ENCODE measurements at regions of chr1 and their contacts with region 1.

Region 1: GRCh38 chr1:58652651-58653184 is 47.1 kb downstream of the MYSM1 start:
- DNase-seq: peak; percentile 11 to 66 (median 55)
- ATAC-seq: peak; percentile 96
- H3K4me3 ChIP-seq: no peak overlapping the region
- H3K4me3 Mint-ChIP-seq: no peak overlapping the region
- H3K27ac ChIP-seq: no peak overlapping the region
- H3K27ac Mint-ChIP-seq: peak overlapping the region in 3 of 9 donors; percentile 7 to 49 (median 25)
- H3K4me1 ChIP-seq: peaks cover 0 to 8% of the 10 kb centered on the region in 2 donors
- H3K4me1 Mint-ChIP-seq: peaks cover 17 to 36% (median 25%) of the 10 kb centered on the region in 7 donors
- H3K27me3 ChIP-seq: no peaks in the 10 kb centered on the region
- H3K27me3 Mint-ChIP-seq: no peaks in the 10 kb centered on the region

Region 2: DNA sequence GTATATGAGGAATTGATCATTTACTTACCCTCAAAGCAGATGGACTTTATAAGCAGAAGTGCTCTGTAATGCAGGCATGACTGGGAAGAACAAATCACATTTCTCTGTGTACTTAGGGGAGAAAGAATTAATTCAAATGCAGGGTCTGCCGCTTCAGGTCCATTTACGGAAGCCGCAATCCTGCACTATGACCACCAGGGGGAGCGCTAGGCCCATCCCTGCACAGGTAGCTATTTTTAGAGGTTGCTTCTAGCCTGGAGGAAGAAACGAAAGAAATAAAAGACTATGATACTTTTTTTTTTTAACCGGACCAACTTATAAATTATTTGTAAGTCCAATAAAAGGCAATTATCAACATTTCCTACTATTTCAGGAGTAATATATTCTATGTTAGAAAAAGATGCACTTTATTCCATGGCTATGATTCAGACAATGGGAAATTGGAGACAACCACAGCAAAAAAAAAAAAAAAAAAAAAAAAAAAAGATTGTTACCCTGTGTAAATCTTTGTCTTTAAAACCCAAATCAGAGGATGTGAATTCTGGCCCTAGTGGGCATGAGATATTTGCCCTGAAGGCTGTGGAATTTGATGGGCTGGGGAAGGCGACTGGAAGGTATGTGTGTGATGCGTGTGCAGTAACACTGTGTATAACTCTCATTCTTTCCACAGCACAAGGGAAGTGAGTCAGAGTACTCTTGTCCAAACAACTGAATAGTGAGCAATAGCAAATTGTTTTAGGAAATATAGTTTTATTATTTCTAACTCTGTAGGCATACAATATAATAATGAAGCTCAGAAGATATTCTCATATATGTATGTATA is 1820.6 kb before region 1 on chr1:
- CTCF ChIA-PET with region 1: no interaction called
- POLR2A ChIA-PET with region 1: no interaction called
- intact Hi-C with region 1: loop called in 1 of 2 experiments (anchors 5 kb)
- DNase-seq: peak; percentile 39 to 76 (median 56)
- ATAC-seq: peak; percentile 83
- H3K4me3 ChIP-seq: no peak overlapping the region
- H3K4me3 Mint-ChIP-seq: peak overlapping the region in 3 of 10 donors; percentile 20 to 51 (median 22)
- H3K27ac ChIP-seq: no peak overlapping the region
- H3K27ac Mint-ChIP-seq: no peak overlapping the region
- H3K4me1 ChIP-seq: no peaks in the 10 kb centered on the region
- H3K4me1 Mint-ChIP-seq: peaks cover 0 to 8% (median 3%) of the 10 kb centered on the region in 7 donors
- H3K27me3 ChIP-seq: peaks cover 0 to 4% of the 10 kb centered on the region in 2 donors
- H3K27me3 Mint-ChIP-seq: peaks cover 0 to 31% (median 23%) of the 10 kb centered on the region in 5 donors

Region 3: GRCh38 chr1:58515794-58516401 is 136.8 kb before region 1 on chr1:
- CTCF ChIA-PET with region 1: interaction called, 43 read pairs
- POLR2A ChIA-PET with region 1: interaction called, 3 read pairs
- intact Hi-C with region 1: loop called (anchors 1 kb)
- DNase-seq: peak in 7 of 9 donors; percentile 30 to 63 (median 53)
- ATAC-seq: peak; percentile 80
- H3K4me3 ChIP-seq: no peak overlapping the region
- H3K4me3 Mint-ChIP-seq: no peak overlapping the region
- H3K27ac ChIP-seq: no peak overlapping the region
- H3K27ac Mint-ChIP-seq: peak overlapping the region; percentile 11 to 84 (median 78)
- H3K4me1 ChIP-seq: no peaks in the 10 kb centered on the region
- H3K4me1 Mint-ChIP-seq: peaks cover 0 to 28% (median 8%) of the 10 kb centered on the region in 7 donors
- H3K27me3 ChIP-seq: no peaks in the 10 kb centered on the region
- H3K27me3 Mint-ChIP-seq: no peaks in the 10 kb centered on the region

Region 4: DNA sequence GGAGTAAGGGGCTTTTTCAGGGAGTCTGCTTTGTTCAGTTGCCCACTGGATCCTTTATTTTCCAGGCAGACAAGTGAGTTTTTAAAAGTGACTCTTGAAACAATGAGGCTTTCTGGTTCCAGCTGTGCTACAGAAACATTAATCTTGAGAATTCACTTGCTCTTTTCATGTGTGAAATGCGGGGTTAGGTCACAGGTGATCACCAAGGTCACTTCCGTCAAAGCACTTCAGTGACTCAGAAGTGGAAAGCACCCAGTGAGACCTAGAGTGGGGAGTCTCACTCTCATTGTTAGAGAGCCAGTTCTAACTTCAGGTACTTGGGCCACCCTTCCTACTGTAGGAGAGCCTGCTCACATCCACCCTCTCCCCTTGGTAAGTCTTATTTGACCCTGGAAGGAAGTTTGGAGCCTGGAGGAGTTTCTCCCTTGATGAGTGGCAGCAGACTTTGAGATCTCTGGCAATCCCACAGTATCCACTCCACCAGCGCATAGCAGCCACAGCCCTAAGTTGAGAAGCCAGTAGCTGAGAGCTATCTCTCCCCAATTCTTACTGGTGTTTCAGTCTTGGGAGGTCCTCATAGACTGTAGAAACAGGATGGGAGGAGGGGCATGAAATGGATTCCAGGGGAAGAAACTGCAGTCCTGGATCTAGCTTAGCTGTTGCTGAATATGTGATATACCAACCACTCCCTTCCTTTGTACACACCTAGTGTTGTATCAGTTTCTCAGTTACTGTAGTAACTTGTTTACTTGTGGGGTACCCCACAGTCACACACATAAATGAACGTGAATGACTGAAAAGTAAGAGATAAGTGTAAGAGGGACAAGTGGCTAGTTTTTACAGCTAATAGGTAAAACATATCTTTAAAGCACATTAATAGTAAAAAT is 78.8 kb before region 1 on chr1:
- CTCF ChIA-PET with region 1: no interaction called
- POLR2A ChIA-PET with region 1: no interaction called
- intact Hi-C with region 1: loop called in 1 of 2 experiments (anchors 2 kb)
- DNase-seq: peak in 5 of 9 donors; percentile 15 to 41 (median 19)
- ATAC-seq: peak; percentile 85
- H3K4me3 ChIP-seq: no peak overlapping the region
- H3K4me3 Mint-ChIP-seq: peak overlapping the region in 1 of 10 donors; percentile 50
- H3K27ac ChIP-seq: no peak overlapping the region
- H3K27ac Mint-ChIP-seq: peak overlapping the region in 2 of 9 donors; percentile 22 to 74
- H3K4me1 ChIP-seq: peaks cover 0 to 3% of the 10 kb centered on the region in 2 donors
- H3K4me1 Mint-ChIP-seq: peaks cover 6 to 35% (median 19%) of the 10 kb centered on the region in 7 donors
- H3K27me3 ChIP-seq: peaks cover 4 to 8% of the 10 kb centered on the region in 2 donors
- H3K27me3 Mint-ChIP-seq: peaks cover 57 to 89% (median 77%) of the 10 kb centered on the region in 5 donors

Region 5: GRCh38 chr1:58670181-58670580 is 17.5 kb after region 1 on chr1:
- CTCF ChIA-PET with region 1: interaction called, 11 read pairs
- POLR2A ChIA-PET with region 1: no interaction called
- intact Hi-C with region 1: no loop called
- DNase-seq: no peak
- ATAC-seq: no peak
- H3K4me3 ChIP-seq: no peak overlapping the region
- H3K4me3 Mint-ChIP-seq: no peak overlapping the region
- H3K27ac ChIP-seq: no peak overlapping the region
- H3K27ac Mint-ChIP-seq: peak overlapping the region in 1 of 9 donors; percentile 15
- H3K4me1 ChIP-seq: no peaks in the 10 kb centered on the region
- H3K4me1 Mint-ChIP-seq: peaks cover 0 to 9% (median 0%) of the 10 kb centered on the region in 7 donors
- H3K27me3 ChIP-seq: no peaks in the 10 kb centered on the region
- H3K27me3 Mint-ChIP-seq: no peaks in the 10 kb centered on the region

Region 6: GRCh38 chr1:58699011-58699762 is 46.5 kb after region 1 on chr1:
- CTCF ChIA-PET with region 1: no interaction called
- POLR2A ChIA-PET with region 1: no interaction called
- intact Hi-C with region 1: loop called in 1 of 2 experiments (anchors 5 kb)
- DNase-seq: no peak
- ATAC-seq: peak; percentile 4
- H3K4me3 ChIP-seq: peak overlapping the region; percentile 80
- H3K4me3 Mint-ChIP-seq: peak overlapping the region; percentile 92 to 100 (median 98)
- H3K27ac ChIP-seq: peak overlapping the region; percentile 88
- H3K27ac Mint-ChIP-seq: peak overlapping the region; percentile 95 to 100 (median 98)
- H3K4me1 ChIP-seq: peaks cover 13 to 23% of the 10 kb centered on the region in 2 donors
- H3K4me1 Mint-ChIP-seq: peaks cover 4 to 22% (median 13%) of the 10 kb centered on the region in 7 donors
- H3K27me3 ChIP-seq: no peaks in the 10 kb centered on the region
- H3K27me3 Mint-ChIP-seq: peaks cover 0 to 3% (median 0%) of the 10 kb centered on the region in 5 donors

Region 7: DNA sequence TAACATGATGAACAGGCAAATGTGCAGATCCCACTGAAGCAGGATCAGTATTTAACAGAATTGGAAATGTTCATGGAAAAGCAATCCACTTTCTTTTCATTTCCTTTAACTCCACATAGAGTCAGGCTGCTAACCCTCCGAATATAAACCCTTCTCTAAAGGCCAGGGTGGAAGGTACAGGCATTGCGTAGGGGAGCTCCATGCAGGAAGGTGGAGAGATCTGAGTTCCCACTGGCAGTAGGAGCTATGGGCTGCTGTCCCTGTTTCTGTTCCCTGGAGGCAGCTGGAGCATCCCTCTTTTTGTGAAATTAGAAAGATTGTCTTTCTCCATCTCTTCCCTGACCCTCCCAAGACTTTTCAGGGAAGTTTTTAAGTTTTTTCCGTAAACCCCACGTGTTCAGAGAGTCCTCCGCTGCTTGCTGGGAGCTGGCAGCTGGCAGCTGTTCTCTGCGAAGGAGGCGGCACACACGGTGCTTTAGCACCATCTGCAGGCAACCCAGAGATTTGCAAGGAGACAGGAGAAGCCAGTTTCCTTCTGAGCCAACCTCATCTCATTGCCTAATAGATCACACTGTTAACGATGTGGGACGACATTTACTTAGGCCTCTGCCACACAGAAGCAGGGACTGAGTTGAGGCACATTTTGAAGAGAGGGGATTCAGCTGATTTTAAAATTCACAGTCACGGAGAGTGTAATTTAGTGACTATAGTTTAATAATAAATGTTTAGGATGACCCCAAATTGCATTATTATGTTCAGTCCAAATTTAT is 1106.6 kb after region 1 on chr1:
- CTCF ChIA-PET with region 1: interaction called, 4 read pairs
- POLR2A ChIA-PET with region 1: no interaction called
- intact Hi-C with region 1: loop called (anchors 2 to 5 kb)
- DNase-seq: peak; percentile 46 to 76 (median 64)
- ATAC-seq: peak; percentile 95
- H3K4me3 ChIP-seq: no peak overlapping the region
- H3K4me3 Mint-ChIP-seq: peak overlapping the region in 7 of 10 donors; percentile 9 to 64 (median 37)
- H3K27ac ChIP-seq: no peak overlapping the region
- H3K27ac Mint-ChIP-seq: peak overlapping the region in 2 of 9 donors; percentile 24 to 32
- H3K4me1 ChIP-seq: no peaks in the 10 kb centered on the region
- H3K4me1 Mint-ChIP-seq: peaks cover 0 to 8% (median 4%) of the 10 kb centered on the region in 7 donors
- H3K27me3 ChIP-seq: no peaks in the 10 kb centered on the region
- H3K27me3 Mint-ChIP-seq: no peaks in the 10 kb centered on the region

Measured in naive thymus-derived CD4-positive, alpha-beta T cell (primary cell).